ENCODE measurements at regions of chr16 and their contacts with region 1.

Region 1: GRCh38 chr16:4288148-4288921 is 15.5 kb upstream of the TFAP4 start:
- DNase-seq: peak; percentile 95
- ATAC-seq: peak; percentile 92
- H3K4me3 Mint-ChIP-seq: no peak overlapping the region
- H3K27ac Mint-ChIP-seq: peak overlapping the region; percentile 76
- H3K4me1 Mint-ChIP-seq: peaks cover 35% of the 10 kb centered on the region
- H3K27me3 Mint-ChIP-seq: no peaks in the 10 kb centered on the region; the same call in 1 of the 2 replicates
- CTCF ChIP-seq: peak; percentile 95

Region 2: GRCh38 chr16:4271176-4272066 is 16.9 kb before region 1 on chr16:
- CTCF ChIA-PET with region 1: interaction called, 33 read pairs
- POLR2A ChIA-PET with region 1: interaction called, 17 read pairs
- DNase-seq: peak; percentile 94
- ATAC-seq: peak; percentile 75
- H3K4me3 Mint-ChIP-seq: peak overlapping the region; percentile 69
- H3K27ac Mint-ChIP-seq: peak overlapping the region; percentile 80
- H3K4me1 Mint-ChIP-seq: peaks cover 14% of the 10 kb centered on the region
- H3K27me3 Mint-ChIP-seq: no peaks in the 10 kb centered on the region
- CTCF ChIP-seq: no peak

Region 3: GRCh38 chr16:4307215-4308037 is 19.1 kb after region 1 on chr16:
- CTCF ChIA-PET with region 1: interaction called, 57 read pairs
- POLR2A ChIA-PET with region 1: interaction called, 10 read pairs
- DNase-seq: peak; percentile 94
- ATAC-seq: peak; percentile 78
- H3K4me3 Mint-ChIP-seq: peak overlapping the region; percentile 96
- H3K27ac Mint-ChIP-seq: peak overlapping the region; percentile 97
- H3K4me1 Mint-ChIP-seq: peaks cover 39% of the 10 kb centered on the region
- H3K27me3 Mint-ChIP-seq: no peaks in the 10 kb centered on the region; the same call in 1 of the 2 replicates
- CTCF ChIP-seq: no peak

Region 4: DNA sequence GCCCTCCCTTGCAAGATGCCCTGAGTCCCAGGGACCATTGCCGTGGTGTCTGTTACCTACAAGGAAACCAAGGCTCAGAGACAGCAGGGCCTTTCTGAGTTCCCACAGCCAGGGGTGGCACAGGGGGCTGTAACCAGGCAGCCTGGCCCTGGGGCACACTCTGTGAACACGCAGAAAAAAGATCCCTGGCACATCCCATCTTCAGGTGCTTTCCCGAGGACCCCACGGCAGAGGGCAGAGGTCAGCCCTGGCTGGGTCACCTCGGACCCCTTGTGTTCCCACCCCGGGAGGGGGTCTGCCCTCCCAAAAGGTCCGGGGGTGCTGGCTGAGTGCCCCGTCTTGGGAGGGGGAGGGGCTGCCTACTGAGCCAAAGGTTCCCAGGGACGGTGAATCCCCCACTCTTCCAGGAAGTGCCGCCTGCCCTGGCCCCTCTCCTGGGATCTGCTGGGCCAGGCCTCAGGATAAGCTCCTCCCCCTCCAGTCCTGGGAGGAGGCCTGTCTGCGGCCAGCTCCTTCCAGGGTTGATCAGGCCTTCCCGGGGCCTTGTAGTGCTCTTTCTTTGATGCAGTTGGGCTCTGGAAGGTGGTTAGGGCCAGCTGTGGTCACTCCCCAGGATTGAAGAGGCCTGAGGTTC is 35.6 kb after region 1 on chr16:
- CTCF ChIA-PET with region 1: interaction called, 185 read pairs
- POLR2A ChIA-PET with region 1: interaction called, 3 read pairs
- DNase-seq: peak; percentile 68
- ATAC-seq: peak; percentile 75
- H3K4me3 Mint-ChIP-seq: no peak overlapping the region
- H3K27ac Mint-ChIP-seq: peak overlapping the region; percentile 93
- H3K4me1 Mint-ChIP-seq: peaks cover 29% of the 10 kb centered on the region
- H3K27me3 Mint-ChIP-seq: no peaks in the 10 kb centered on the region
- CTCF ChIP-seq: no peak

Region 5: GRCh38 chr16:4350787-4351659 is 62.7 kb after region 1 on chr16 and contains the start of gene PAM16:
- CTCF ChIA-PET with region 1: interaction called, 12 read pairs
- POLR2A ChIA-PET with region 1: no interaction called
- DNase-seq: peak; percentile 99
- ATAC-seq: peak; percentile 96
- H3K4me3 Mint-ChIP-seq: peak within 1 kb of the TSS; percentile 95
- H3K27ac Mint-ChIP-seq: peak within 1 kb of the TSS; percentile 70
- H3K4me1 Mint-ChIP-seq: peaks cover 11% of the 10 kb centered on the region
- H3K27me3 Mint-ChIP-seq: 0 out of 2 replicates have a peak, but pooled peaks cover 3% of the 10 kb centered on the region
- CTCF ChIP-seq: no peak
- total RNA-seq, gene PAM16: 87.2 to 93.7 TPM (median 88.9 TPM) in 3 replicates

Measured in WTC11 (cell line).